ENCODE measurements at regions of chr3 and their contacts with region 1.

Region 1: DNA sequence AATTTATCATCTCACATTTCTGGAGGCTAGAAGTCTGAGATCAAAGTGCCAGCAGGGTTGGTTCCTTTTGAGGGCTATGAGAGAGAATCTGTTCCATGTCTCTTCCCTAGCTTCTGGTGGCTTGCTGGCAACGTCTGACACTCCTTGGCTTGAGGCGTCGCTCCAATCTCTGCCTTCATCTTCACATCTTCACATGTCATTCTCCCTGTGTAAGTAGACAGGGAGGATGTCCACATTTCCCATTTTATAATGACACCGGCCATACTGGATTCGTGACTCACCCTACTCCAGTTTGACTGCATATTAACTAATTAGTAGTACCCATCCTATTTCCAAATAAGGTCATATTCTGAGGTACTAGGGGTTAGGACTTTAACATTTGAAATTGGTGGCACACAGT is 17.5 kb upstream of the ARHGAP31 start:
- DNase-seq: no peak
- ATAC-seq: no peak
- H3K4me3 ChIP-seq: no peak overlapping the region
- H3K27ac ChIP-seq: no peak overlapping the region
- H3K4me1 ChIP-seq: no peaks in the 10 kb centered on the region
- CTCF ChIP-seq: no peak
- EP300 ChIP-seq: no peak
- POLR2A ChIP-seq: no peak
- RAD21 ChIP-seq: no peak

Region 2: DNA sequence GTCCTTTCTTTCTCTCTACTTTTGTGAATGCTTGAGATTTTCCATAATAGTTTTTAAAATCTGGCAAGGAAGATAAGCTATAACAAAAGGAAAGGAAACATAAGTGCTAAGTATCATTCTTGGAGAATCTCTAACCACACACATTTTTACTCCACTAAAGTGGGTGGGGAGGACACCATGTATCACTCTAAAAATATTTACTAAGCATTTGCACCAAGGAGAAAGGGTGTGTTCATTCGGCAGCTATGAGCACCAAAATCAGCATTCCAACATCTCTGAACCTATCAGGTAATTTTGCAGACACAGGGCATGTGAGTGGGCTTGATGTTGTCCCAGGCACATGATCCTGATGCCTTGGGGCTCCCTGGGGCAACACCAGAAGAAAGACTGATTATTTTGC is 41.5 kb before region 1 on chr3:
- CTCF ChIA-PET with region 1: no interaction called
- POLR2A ChIA-PET with region 1: no interaction called
- DNase-seq: peak in 1 of 2 experiments; percentile 27
- ATAC-seq: peak in 1 of 2 experiments; percentile 11; a peak in 3 of 6 replicates
- H3K4me3 ChIP-seq: no peak overlapping the region
- H3K27ac ChIP-seq: peak overlapping the region; percentile 1 to 60; a peak in 3 of 6 replicates
- H3K4me1 ChIP-seq: peaks cover 58% of the 10 kb centered on the region
- CTCF ChIP-seq: no peak
- EP300 ChIP-seq: no peak
- POLR2A ChIP-seq: no peak
- RAD21 ChIP-seq: no peak

Region 3: GRCh38 chr3:119257682-119258410 is 18.8 kb before region 1 on chr3:
- CTCF ChIA-PET with region 1: interaction called, 13 read pairs
- POLR2A ChIA-PET with region 1: no interaction called
- DNase-seq: peak in 1 of 2 experiments; percentile 63
- ATAC-seq: peak in 1 of 2 experiments; percentile 67; a peak in 1 of 6 replicates
- H3K4me3 ChIP-seq: no peak overlapping the region
- H3K27ac ChIP-seq: no peak overlapping the region
- H3K4me1 ChIP-seq: no peaks in the 10 kb centered on the region
- CTCF ChIP-seq: no peak
- EP300 ChIP-seq: no peak
- POLR2A ChIP-seq: no peak
- RAD21 ChIP-seq: no peak

Region 4: GRCh38 chr3:119293871-119294695 is 17.4 kb after region 1 on chr3 and contains the start of gene ARHGAP31:
- CTCF ChIA-PET with region 1: interaction called, 59 read pairs
- POLR2A ChIA-PET with region 1: no interaction called
- DNase-seq: peak; percentile 45 to 49
- ATAC-seq: peak; percentile 85 to 86
- H3K4me3 ChIP-seq: peak within 1 kb of the TSS; percentile 76
- H3K27ac ChIP-seq: peak within 1 kb of the TSS; percentile 72 to 88
- H3K4me1 ChIP-seq: peaks cover 14% of the 10 kb centered on the region
- CTCF ChIP-seq: no peak
- EP300 ChIP-seq: no peak
- POLR2A ChIP-seq: 0 out of 2 replicates have a peak, but pooled peaks have one; percentile 8
- RAD21 ChIP-seq: no peak
- polyA plus RNA-seq, gene ARHGAP31: 1.3 and 1.4 TPM in 2 replicates

Region 5: DNA sequence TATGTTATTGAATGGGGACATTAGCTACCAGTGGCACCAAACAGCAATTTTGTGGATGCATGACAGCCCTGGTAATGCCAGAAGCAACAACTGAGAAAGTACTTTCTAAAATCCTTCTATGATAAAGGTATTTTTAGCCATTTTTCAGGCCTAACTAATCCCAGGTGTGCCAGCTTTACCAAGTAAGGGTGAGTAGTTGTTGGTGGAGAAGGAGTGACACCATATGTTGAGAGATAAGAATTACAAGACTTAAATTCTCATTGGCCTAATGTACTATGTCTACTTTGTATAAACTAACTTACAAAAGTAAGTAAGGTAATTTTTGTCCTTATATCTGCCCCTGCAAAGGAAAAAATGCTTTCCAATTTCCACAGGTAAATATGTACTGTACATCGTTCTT is 404.6 kb after region 1 on chr3:
- CTCF ChIA-PET with region 1: interaction called, 62 read pairs
- POLR2A ChIA-PET with region 1: no interaction called
- DNase-seq: peak; percentile 27 to 44
- ATAC-seq: peak; percentile 47 to 54; a peak in 2 of 6 replicates
- H3K4me3 ChIP-seq: no peak overlapping the region
- H3K27ac ChIP-seq: no peak overlapping the region
- H3K4me1 ChIP-seq: peaks cover 5% of the 10 kb centered on the region; the same call in 2 of the 3 replicates
- CTCF ChIP-seq: peak; percentile 70
- EP300 ChIP-seq: no peak
- POLR2A ChIP-seq: no peak
- RAD21 ChIP-seq: peak; percentile 84 to 87

Measured in A549 (cell line).